IMR-90 (cell line): ENCODE measurements at regions of chr2 and their contacts with region 1.

Region 1: GRCh38 chr2:189933911-189934399 is 128.6 kb downstream of the MSTN start:
- DNase-seq: peak; percentile 93
- ATAC-seq: peak; percentile 87
- H3K4me3 ChIP-seq: no peak overlapping the region
- H3K27ac ChIP-seq: no peak overlapping the region; the same call in 1 of the 2 replicates
- H3K4me1 ChIP-seq: peaks cover 3% of the 10 kb centered on the region; the same call in 1 of the 2 replicates
- H3K27me3 ChIP-seq: no peaks in the 10 kb centered on the region
- CTCF ChIP-seq: no peak
- POLR2A ChIP-seq: no peak
- RAD21 ChIP-seq: no peak

Region 2: GRCh38 chr2:189880832-189881492 is 53.0 kb before region 1 on chr2:
- CTCF ChIA-PET with region 1: no interaction called
- POLR2A ChIA-PET with region 1: interaction called, 10 read pairs
- dilution Hi-C with region 1: no loop called
- in situ Hi-C with region 1: no loop called
- intact Hi-C with region 1: no loop called
- DNase-seq: no peak
- ATAC-seq: no peak
- H3K4me3 ChIP-seq: no peak overlapping the region
- H3K27ac ChIP-seq: no peak overlapping the region
- H3K4me1 ChIP-seq: no peaks in the 10 kb centered on the region
- H3K27me3 ChIP-seq: no peaks in the 10 kb centered on the region
- CTCF ChIP-seq: no peak
- POLR2A ChIP-seq: no peak
- RAD21 ChIP-seq: no peak

Region 3: GRCh38 chr2:190636373-190636772 is 702.4 kb after region 1 on chr2:
- CTCF ChIA-PET with region 1: no interaction called
- POLR2A ChIA-PET with region 1: no interaction called
- dilution Hi-C with region 1: no loop called
- in situ Hi-C with region 1: no loop called
- intact Hi-C with region 1: no loop called
- DNase-seq: peak; percentile 75
- ATAC-seq: no peak
- H3K4me3 ChIP-seq: no peak overlapping the region
- H3K27ac ChIP-seq: no peak overlapping the region
- H3K4me1 ChIP-seq: peaks cover 7% of the 10 kb centered on the region
- H3K27me3 ChIP-seq: no peaks in the 10 kb centered on the region
- CTCF ChIP-seq: no peak
- POLR2A ChIP-seq: no peak
- RAD21 ChIP-seq: no peak